Mammary epithelial cell (primary cell): ENCODE measurements at regions of chr17 and their contacts with region 1.

Region 1: GRCh38 chr17:48047741-48048383 is at the start of gene NFE2L1:
- DNase-seq: peak; percentile 100
- H3K4me3 ChIP-seq: peak within 1 kb of the TSS; percentile 55 to 87 (median 74)
- H3K27ac ChIP-seq: peak within 1 kb of the TSS; percentile 88
- H3K4me1 ChIP-seq: peaks cover 61% of the 10 kb centered on the region
- H3K27me3 ChIP-seq: no peaks in the 10 kb centered on the region
- CTCF ChIP-seq: no peak
- total RNA-seq, gene NFE2L1: 283 to 291 TPM

Region 2: DNA sequence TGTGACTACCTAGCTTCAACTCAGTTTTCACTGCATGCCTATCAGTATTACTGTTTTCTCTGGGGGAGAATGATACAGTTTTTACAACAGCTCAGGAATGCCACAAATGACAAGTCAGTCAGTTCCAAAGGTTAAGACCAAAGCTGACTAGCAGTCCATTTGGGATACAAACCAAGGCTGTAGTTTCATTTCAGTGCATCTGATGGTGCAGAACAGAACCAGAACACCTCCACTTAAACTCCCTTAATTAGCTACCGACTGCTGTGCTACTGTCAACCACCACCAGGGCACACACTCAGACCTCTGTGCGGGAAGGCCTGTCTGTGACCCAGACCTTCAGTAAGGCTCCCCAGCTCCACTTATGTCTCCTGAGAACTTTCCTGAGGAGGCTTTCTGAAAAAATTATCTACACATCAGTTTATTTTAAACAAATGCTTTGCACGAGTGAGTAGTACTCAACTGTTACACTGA is 20.7 kb after region 1 on chr17:
- CTCF ChIA-PET with region 1: no interaction called
- dilution Hi-C with region 1: no loop called
- in situ Hi-C with region 1: no loop called
- intact Hi-C with region 1: loop called (anchors 1 kb)
- DNase-seq: no peak
- H3K4me3 ChIP-seq: no peak overlapping the region
- H3K27ac ChIP-seq: no peak overlapping the region
- H3K4me1 ChIP-seq: peaks cover 13% of the 10 kb centered on the region
- H3K27me3 ChIP-seq: no peaks in the 10 kb centered on the region
- CTCF ChIP-seq: peak; percentile 49 to 56